HEK293 (cell line): ENCODE measurements at regions of chr18 and their contacts with region 1.

Region 1: GRCh38 chr18:46213295-46213694 is 109.1 kb downstream of the HAUS1 start:
- H3K4me3 ChIP-seq: no peak overlapping the region
- H3K27ac ChIP-seq: no peak overlapping the region
- H3K4me1 ChIP-seq: peaks cover 14% of the 10 kb centered on the region
- CTCF ChIP-seq: no peak

Region 2: DNA sequence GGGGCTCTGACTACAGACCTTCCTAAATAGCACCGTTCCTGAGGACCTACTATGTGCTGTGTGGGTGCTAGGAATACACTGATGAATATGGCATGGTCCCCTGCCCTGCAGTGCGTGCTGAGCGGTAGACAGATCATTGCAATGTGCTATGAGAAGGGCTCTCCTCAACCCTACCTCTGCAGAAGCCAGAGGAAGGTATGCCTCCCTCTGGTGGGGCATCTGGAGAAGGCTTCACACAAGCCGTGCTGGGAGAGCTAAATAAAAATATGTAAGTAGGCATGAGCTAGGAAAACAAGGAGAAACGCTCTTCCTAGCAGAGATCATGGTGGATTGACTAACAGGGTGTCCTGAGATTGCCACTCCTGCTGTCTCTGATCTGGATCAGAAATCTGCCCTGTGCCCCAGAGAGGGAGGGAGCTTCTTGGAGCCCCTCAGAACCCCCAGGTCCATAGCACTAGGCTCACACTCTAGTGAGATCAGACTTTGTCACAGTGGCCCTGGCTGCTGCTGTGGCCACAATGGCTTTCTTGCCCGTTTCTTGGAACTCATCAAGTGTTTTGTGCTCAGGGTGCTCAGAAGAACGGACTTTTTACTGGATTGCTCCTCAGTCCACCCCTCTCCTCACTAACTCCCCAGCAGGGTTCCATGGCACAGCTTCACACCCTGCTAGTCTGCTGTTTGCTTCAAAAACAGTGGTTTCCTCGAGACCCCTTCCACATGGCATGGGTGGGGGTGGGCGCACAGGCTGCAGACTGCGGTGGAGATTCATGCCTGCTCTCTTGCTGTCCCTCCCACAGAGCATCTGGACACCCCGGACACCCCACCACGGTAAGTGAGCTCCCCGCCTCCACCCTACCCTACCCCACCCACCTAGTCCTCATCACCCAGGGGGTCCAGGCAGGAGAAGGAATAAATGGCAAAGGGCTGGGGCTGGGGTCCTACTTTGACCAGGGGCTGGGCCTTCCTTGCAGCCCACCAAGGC is 373.6 kb before region 1 on chr18:
- CTCF ChIA-PET with region 1: no interaction called
- POLR2A ChIA-PET with region 1: no interaction called
- H3K4me3 ChIP-seq: no peak overlapping the region
- H3K27ac ChIP-seq: no peak overlapping the region
- H3K4me1 ChIP-seq: peaks cover 3% of the 10 kb centered on the region; the same call in 1 of the 2 replicates
- CTCF ChIP-seq: peak; percentile 77

Region 3: GRCh38 chr18:46199515-46200147 is 13.7 kb before region 1 on chr18:
- CTCF ChIA-PET with region 1: interaction called, 27 read pairs
- POLR2A ChIA-PET with region 1: interaction called, 7 read pairs
- H3K4me3 ChIP-seq: no peak overlapping the region
- H3K27ac ChIP-seq: peak overlapping the region; percentile 37; the same call in 1 of the 2 replicates
- H3K4me1 ChIP-seq: peaks cover 11% of the 10 kb centered on the region; the same call in 1 of the 2 replicates
- CTCF ChIP-seq: no peak

Region 4: DNA sequence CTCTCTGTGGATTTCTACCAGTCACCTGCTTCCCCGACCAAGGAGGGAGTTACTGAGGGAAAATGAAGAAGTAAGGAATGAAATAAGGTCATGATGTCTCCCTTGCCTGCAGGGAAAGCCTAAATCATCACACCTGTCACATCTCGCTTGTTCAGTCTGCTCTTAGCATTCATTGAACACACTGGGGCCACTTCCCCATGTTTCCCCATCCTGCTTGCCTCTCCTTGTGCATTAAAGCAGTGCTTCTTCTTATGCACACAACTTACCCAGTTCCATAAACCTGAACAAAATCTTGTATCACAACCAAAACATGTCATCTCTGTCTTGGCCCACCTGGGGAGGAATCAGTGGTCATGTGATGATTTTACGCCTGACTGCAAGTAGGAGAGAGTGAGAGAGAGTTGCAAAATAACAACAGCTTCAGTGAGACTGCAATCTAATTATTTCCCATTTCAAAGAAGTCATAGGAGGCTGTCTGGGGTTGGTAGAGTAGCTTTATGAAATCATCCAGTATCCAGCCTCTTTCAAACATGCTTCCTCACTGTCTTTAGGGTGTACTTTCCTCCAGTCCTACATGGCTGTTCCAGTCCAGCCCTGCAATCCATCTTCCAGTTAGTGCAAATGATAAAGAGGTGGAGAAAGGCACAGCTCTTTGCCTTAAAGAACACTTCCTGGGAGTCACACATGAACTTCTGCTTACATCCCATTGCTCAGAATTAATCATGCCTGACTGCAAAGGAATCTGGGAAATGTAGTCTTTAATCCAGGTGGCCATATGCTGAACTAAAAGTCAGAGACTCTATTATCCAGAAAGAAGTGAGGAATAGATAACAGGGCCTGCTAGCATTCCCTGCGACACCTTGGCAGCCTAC is 111.0 kb after region 1 on chr18:
- CTCF ChIA-PET with region 1: no interaction called
- POLR2A ChIA-PET with region 1: no interaction called
- H3K4me3 ChIP-seq: no peak overlapping the region
- H3K27ac ChIP-seq: no peak overlapping the region
- H3K4me1 ChIP-seq: peaks cover 8% of the 10 kb centered on the region
- CTCF ChIP-seq: no peak